Dendritic cell treated with granulocyte-macrophage colony-stimulating factor and Interleukin-4, amounts not matched to agents 40 ng/mL and 50 ng/mL, for 4 days (primary cell): ENCODE measurements at regions of chr20 and their contacts with region 1.

Region 1: GRCh38 chr20:5100684-5101347 is 18.9 kb downstream of the PCNA start:
- H3K4me3 Mint-ChIP-seq: no peak overlapping the region
- H3K27ac Mint-ChIP-seq: peak overlapping the region; percentile 77
- H3K4me1 Mint-ChIP-seq: peaks cover 24% of the 10 kb centered on the region
- H3K27me3 Mint-ChIP-seq: no peaks in the 10 kb centered on the region

Region 2: DNA sequence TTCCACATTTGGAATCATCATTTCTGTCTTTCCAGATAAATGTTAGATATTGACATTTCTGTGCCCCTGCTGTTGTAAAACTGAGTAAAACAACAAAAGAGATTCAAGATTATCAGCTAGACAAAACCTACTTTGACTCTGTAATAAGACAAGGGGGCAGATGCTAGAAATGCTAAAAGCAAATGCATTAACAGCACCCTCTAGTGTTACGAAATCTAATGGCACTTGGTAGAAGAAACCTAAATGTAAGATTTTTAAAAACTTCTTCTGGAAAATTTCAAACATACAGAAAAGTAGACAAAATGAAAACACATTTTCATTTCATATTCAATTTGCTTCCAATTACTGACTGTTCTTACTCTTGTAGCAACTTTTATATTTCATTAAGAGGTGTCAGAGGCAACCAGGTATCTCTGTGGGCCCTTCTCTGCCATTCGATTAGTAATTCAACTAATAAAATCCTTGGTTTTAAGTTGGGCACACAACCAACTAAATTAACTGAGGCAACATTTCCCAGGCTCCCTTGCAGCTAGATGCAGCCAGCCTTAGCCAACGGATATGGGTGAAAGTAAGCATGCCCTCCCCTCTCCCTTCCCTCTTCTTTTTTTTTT is 144.5 kb before region 1 on chr20:
- intact Hi-C with region 1: loop called (anchors 5 kb)
- H3K4me3 Mint-ChIP-seq: no peak overlapping the region
- H3K27ac Mint-ChIP-seq: no peak overlapping the region
- H3K4me1 Mint-ChIP-seq: peaks cover 20% of the 10 kb centered on the region
- H3K27me3 Mint-ChIP-seq: no peaks in the 10 kb centered on the region

Region 3: GRCh38 chr20:5001174-5002076 is 99.4 kb before region 1 on chr20 and contains the start of gene SLC23A2:
- intact Hi-C with region 1: loop called (anchors 5 kb)
- H3K4me3 Mint-ChIP-seq: peak within 1 kb of the TSS; percentile 98
- H3K27ac Mint-ChIP-seq: peak within 1 kb of the TSS; percentile 94
- H3K4me1 Mint-ChIP-seq: peaks cover 45% of the 10 kb centered on the region
- H3K27me3 Mint-ChIP-seq: peaks cover 2% of the 10 kb centered on the region